ENCODE measurements at regions of chr2 and their contacts with region 1.

Region 1: GRCh38 chr2:68282811-68283418 is 30.6 kb upstream of the PPP3R1 start:
- DNase-seq: no peak
- H3K4me3 ChIP-seq: no peak overlapping the region
- H3K27me3 ChIP-seq: no peaks in the 10 kb centered on the region
- CTCF ChIP-seq: peak; percentile 80

Region 2: GRCh38 chr2:68258851-68259250 is 24.1 kb before region 1 on chr2:
- CTCF ChIA-PET with region 1: interaction called, 13 read pairs
- POLR2A ChIA-PET with region 1: no interaction called
- DNase-seq: no peak
- H3K4me3 ChIP-seq: no peak overlapping the region
- H3K27me3 ChIP-seq: no peaks in the 10 kb centered on the region
- CTCF ChIP-seq: no peak

Region 3: DNA sequence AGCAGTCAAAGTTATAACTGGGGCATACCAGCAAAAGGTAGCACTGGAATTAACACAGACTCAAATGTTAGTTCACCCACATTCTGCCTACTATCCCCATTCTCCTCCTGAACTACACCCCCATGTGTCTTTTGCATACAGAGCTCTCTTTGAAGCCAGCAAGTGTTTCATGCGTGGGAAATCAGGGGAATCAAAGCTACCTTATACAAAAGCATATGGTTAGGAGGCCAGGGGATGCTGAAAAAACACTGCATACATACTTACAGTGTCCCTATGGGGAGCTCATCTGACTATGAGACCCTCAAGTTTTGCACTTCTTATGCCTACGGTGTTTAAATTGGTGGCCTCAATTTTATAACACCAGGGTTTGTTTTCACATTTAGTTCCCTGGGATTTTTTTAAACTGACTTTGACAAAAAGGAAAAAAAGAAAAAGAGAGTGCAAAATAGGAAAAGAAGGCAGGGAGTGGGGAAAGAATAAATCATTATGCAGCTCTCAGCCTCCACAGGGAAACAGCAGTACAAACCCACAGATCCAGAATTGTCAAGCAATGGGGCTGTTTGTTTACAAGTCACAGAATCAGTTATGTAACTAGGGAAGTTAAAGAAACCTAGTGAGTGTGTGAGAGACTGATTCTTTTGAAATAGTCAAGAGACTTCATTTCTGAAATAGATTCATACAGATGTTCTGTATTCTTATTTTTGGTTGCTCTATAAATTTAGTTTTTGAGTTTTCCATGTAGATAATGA is 10.5 kb before region 1 on chr2:
- CTCF ChIA-PET with region 1: interaction called, 20 read pairs
- POLR2A ChIA-PET with region 1: no interaction called
- DNase-seq: no peak
- H3K4me3 ChIP-seq: no peak overlapping the region
- H3K27me3 ChIP-seq: no peaks in the 10 kb centered on the region
- CTCF ChIP-seq: no peak

Region 4: GRCh38 chr2:68726608-68727367 is 443.9 kb after region 1 on chr2:
- CTCF ChIA-PET with region 1: no interaction called
- POLR2A ChIA-PET with region 1: no interaction called
- DNase-seq: no peak
- H3K4me3 ChIP-seq: no peak overlapping the region
- H3K27me3 ChIP-seq: no peaks in the 10 kb centered on the region
- CTCF ChIP-seq: no peak